ENCODE measurements at regions of chr14 and their contacts with region 1.

Region 1: GRCh38 chr14:105549481-105549880 is 23.1 kb downstream of the TMEM121 start:
- DNase-seq: no peak
- H3K4me3 Mint-ChIP-seq: no peak overlapping the region
- H3K27ac Mint-ChIP-seq: no peak overlapping the region
- H3K4me1 Mint-ChIP-seq: no peaks in the 10 kb centered on the region
- H3K27me3 Mint-ChIP-seq: peaks cover 29% of the 10 kb centered on the region
- CTCF ChIP-seq: no peak

Region 2: DNA sequence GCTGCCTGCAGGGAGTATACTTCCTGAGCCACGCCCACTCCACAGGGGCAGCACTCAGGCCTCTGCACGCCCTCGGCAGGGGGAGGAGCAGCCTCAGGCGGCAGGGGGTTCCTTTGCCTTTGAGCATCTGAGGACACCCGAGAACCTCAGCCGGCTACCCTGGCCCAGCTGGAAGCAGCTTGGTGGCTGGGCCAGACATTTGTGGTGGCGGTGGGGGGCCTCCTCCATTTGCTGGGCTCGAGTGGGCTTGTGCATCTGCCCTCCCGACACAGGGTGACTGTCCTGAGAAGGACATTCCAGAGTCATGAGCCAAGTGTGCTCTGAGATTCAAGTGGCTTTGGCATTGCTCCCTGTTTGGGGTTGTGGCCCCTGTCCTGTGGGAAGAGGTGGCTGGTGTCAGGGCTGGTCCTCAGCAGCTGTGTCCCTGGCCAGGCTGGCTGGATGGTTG is 83.9 kb before region 1 on chr14:
- CTCF ChIA-PET with region 1: no interaction called
- POLR2A ChIA-PET with region 1: no interaction called
- intact Hi-C with region 1: no loop called
- DNase-seq: no peak
- H3K4me3 Mint-ChIP-seq: no peak overlapping the region
- H3K27ac Mint-ChIP-seq: no peak overlapping the region
- H3K4me1 Mint-ChIP-seq: no peaks in the 10 kb centered on the region
- H3K27me3 Mint-ChIP-seq: no peaks in the 10 kb centered on the region
- CTCF ChIP-seq: no peak

Region 3: GRCh38 chr14:105537369-105538164 is 11.9 kb before region 1 on chr14:
- CTCF ChIA-PET with region 1: interaction called, 21 read pairs
- POLR2A ChIA-PET with region 1: no interaction called
- intact Hi-C with region 1: no loop called
- DNase-seq: peak; percentile 56
- H3K4me3 Mint-ChIP-seq: no peak overlapping the region
- H3K27ac Mint-ChIP-seq: no peak overlapping the region
- H3K4me1 Mint-ChIP-seq: no peaks in the 10 kb centered on the region
- H3K27me3 Mint-ChIP-seq: peaks cover 63% of the 10 kb centered on the region
- CTCF ChIP-seq: peak; percentile 97

Region 4: GRCh38 chr14:105700622-105701288 is 151.3 kb after region 1 on chr14:
- CTCF ChIA-PET with region 1: no interaction called
- POLR2A ChIA-PET with region 1: no interaction called
- intact Hi-C with region 1: no loop called
- DNase-seq: peak; percentile 36
- H3K4me3 Mint-ChIP-seq: no peak overlapping the region
- H3K27ac Mint-ChIP-seq: peak overlapping the region; percentile 76
- H3K4me1 Mint-ChIP-seq: peaks cover 8% of the 10 kb centered on the region
- H3K27me3 Mint-ChIP-seq: peaks cover 1% of the 10 kb centered on the region
- CTCF ChIP-seq: no peak

Region 5: DNA sequence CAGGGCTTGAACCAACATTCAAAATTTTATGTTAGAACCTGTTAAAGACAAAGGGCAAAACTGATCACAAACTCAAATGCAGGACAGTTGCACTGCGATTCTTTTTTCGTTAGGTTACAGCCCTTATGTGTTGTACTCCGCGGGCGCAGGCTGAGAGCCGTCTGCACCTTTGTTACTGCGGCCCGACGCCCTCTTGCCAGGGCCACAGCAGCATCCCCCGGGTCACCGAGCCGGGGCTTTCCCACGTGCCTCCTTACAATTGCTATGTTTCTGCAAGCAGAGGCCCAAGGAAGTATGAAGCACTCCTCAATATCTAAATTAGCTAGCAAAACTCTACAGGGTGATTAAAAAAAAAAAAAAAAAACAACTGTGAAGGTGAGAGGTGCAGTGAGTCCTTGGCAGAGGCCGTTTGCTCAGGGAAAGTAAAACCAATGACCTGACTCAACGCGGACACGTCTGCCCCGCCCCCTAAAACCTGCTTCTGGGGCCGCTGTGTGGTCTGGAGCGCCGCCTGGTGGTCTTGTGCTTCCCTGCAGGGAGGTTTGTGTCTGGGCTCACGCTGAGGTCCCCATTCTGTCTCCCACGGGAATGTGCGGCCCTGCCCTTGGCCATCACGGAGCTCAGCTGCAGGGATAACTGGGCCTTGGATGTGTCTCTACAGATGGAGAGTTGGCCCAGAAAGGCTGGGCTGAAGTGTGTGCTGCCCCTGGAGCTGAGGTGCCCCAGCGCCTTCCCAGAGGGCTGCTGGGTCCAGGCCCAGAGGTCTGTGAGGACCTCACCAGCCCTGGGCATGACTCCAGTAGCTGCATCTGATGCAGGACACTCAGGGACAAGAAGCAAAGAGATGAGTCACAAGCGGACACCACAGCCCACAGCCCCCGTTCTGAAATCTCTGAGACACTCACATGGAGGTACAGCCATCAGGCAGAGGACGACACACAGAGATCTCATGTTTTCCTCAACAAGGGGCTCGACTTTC is 395.4 kb after region 1 on chr14:
- CTCF ChIA-PET with region 1: no interaction called
- POLR2A ChIA-PET with region 1: no interaction called
- intact Hi-C with region 1: loop called (anchors 10 kb)
- DNase-seq: peak; percentile 71
- H3K4me3 Mint-ChIP-seq: no peak overlapping the region
- H3K27ac Mint-ChIP-seq: no peak overlapping the region
- H3K4me1 Mint-ChIP-seq: no peaks in the 10 kb centered on the region
- H3K27me3 Mint-ChIP-seq: no peaks in the 10 kb centered on the region
- CTCF ChIP-seq: peak; percentile 58

Measured in MCF 10A (cell line).